WTC11 (cell line): ENCODE measurements at regions of chr12 and their contacts with region 1.

Region 1: DNA sequence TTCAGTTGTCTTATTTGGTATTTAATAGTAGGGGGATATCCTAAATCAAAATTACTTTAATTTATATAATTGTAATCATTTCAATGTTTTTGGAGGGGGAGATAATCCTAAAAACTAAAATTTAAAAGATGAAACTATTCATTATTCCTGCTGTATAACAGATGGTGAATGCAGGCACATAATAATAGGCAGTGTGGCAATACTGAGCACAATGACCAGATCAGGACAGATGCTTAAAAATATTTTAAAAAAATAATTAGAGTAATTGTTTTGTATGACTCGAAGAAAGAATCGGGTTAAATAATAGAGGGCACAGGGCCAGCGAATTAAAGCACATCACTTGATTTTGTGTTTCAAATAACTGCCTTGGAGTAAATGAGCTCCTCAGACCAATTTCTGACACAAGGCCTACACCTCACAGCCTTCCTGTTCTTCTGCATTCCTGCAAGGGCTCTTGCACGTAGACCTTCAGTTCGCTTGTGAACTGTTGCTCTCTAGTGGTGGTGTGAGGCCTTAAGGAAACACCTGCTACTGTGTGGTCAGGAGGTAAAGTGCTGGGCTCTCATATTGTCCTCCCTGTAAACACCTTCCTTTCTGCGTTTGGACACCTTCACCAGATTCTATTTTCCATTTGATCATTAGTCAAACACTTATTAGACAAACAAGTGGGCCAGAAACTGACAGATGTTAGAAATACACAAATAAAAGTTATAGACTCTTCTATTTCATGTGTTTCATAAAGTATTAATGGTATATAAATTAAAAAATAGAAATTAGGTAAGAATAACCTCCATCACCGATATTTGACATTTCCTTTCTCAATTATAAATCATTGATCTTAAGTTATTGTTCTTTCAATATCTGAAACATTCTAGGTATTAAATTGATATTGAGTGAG is 29.3 kb upstream of the KLRF1 start:
- DNase-seq: peak; percentile 63
- ATAC-seq: peak; percentile 100
- H3K4me3 Mint-ChIP-seq: no peak overlapping the region
- H3K27ac Mint-ChIP-seq: no peak overlapping the region
- H3K4me1 Mint-ChIP-seq: peaks cover 26% of the 10 kb centered on the region
- H3K27me3 Mint-ChIP-seq: no peaks in the 10 kb centered on the region; the same call in 1 of the 2 replicates
- CTCF ChIP-seq: no peak

Region 2: DNA sequence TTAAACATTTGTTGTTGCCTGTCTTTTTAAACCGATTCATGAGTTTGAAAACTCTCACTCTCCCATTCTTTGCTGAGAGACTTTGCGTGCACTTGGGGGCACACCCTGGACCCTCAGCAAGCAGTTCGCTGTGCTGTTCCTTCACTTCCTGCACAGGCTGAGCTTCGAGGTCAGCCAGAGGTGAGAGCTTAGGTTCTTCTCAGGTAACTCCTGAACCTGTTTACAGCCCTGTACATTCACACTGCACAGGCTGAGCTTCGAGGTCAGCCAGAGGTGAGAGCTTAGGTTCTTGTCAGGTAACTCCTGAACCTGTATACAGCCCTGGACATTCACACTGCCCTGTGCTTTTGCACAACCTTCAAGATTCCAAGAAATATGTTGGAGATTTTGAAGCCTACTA is 55.3 kb before region 1 on chr12:
- CTCF ChIA-PET with region 1: interaction called, 148 read pairs
- POLR2A ChIA-PET with region 1: no interaction called
- DNase-seq: no peak
- ATAC-seq: no peak
- H3K4me3 Mint-ChIP-seq: no peak overlapping the region
- H3K27ac Mint-ChIP-seq: no peak overlapping the region
- H3K4me1 Mint-ChIP-seq: peaks cover 21% of the 10 kb centered on the region
- H3K27me3 Mint-ChIP-seq: peaks cover 12% of the 10 kb centered on the region
- CTCF ChIP-seq: no peak

Region 3: DNA sequence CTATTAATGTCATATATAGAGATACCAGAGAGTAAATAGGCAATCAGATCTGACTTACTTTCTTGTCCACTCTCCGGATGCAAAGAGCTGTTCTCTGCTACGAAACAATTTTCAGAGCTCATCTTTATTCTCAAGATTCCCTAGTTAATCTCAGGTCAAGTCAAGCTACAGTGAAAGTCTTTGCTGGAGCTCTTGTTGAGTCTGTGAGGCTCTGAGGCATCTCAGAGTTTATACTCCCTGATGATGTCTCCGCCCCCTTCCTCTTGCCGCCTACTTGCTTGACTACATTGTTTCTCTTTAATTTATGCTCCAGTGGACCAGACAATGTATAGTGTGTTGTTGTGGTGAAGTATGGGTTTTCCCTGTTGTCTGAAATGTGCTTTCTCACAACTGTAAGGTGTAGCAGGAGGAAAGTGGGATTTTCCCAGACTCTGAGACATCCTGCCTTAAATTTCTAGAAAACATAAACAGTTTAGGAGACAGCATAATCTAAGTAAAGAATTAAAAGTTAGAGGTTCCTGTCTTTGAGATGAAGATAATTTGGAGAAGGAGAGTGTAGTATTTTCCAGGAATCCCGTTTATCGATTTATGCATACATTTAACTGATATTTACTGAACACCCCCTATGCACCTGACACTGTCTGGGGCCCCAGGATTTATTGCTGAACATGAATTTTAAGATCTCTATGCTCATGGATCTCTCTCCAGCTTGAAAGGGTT is 37.1 kb before region 1 on chr12 and contains the start of gene CD69:
- CTCF ChIA-PET with region 1: interaction called, 22 read pairs
- POLR2A ChIA-PET with region 1: no interaction called
- DNase-seq: no peak
- ATAC-seq: peak; percentile 48; the same call in 1 of the 2 replicates
- H3K4me3 Mint-ChIP-seq: no peak within 1 kb of the TSS
- H3K27ac Mint-ChIP-seq: no peak within 1 kb of the TSS
- H3K4me1 Mint-ChIP-seq: peaks cover 15% of the 10 kb centered on the region
- H3K27me3 Mint-ChIP-seq: no peaks in the 10 kb centered on the region
- CTCF ChIP-seq: no peak
- total RNA-seq, gene CD69: 0.34 to 0.60 TPM (median 0.42 TPM) in 3 replicates